RWPE1 (cell line): ENCODE measurements at regions of chr6 and their contacts with region 1.

Region 1: GRCh38 chr6:90179190-90180169 is 117.2 kb downstream of the BACH2 start:
- DNase-seq: no peak
- H3K27ac ChIP-seq: no peak overlapping the region
- CTCF ChIP-seq: no peak

Region 2: GRCh38 chr6:89940225-89941027 is 239.1 kb before region 1 on chr6:
- CTCF ChIA-PET with region 1: interaction called, 10 read pairs
- POLR2A ChIA-PET with region 1: no interaction called
- DNase-seq: peak; percentile 78
- H3K27ac ChIP-seq: 0 out of 2 replicates have a peak overlapping the region, but pooled peaks have one; percentile 14
- CTCF ChIP-seq: peak; percentile 69

Region 3: DNA sequence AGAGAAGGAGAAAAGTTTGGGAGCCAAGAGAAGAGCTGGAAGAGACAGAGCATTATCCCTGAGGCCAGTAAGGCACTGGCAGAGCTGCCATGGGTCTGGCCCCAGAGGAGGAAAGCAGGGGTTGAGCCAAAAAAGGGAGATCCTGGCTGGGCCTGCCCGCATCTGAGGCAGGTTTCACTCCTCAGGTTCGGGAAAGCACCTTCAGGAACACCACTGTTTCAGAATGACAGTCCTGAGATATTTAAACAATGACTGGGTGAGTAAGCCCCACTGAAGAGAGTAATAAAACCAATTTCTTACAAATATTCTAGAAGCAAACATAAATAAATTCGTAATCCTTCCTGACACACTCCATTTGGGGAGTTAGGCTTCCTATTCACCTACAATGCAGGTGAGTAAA is 35.1 kb before region 1 on chr6:
- CTCF ChIA-PET with region 1: no interaction called
- POLR2A ChIA-PET with region 1: no interaction called
- DNase-seq: no peak
- H3K27ac ChIP-seq: no peak overlapping the region
- CTCF ChIP-seq: no peak

Region 4: GRCh38 chr6:90168693-90169131 is 10.8 kb before region 1 on chr6:
- CTCF ChIA-PET with region 1: no interaction called
- POLR2A ChIA-PET with region 1: no interaction called
- DNase-seq: peak; percentile 56
- H3K27ac ChIP-seq: no peak overlapping the region
- CTCF ChIP-seq: no peak